ENCODE measurements at regions of chr1 and their contacts with region 1.

Region 1: DNA sequence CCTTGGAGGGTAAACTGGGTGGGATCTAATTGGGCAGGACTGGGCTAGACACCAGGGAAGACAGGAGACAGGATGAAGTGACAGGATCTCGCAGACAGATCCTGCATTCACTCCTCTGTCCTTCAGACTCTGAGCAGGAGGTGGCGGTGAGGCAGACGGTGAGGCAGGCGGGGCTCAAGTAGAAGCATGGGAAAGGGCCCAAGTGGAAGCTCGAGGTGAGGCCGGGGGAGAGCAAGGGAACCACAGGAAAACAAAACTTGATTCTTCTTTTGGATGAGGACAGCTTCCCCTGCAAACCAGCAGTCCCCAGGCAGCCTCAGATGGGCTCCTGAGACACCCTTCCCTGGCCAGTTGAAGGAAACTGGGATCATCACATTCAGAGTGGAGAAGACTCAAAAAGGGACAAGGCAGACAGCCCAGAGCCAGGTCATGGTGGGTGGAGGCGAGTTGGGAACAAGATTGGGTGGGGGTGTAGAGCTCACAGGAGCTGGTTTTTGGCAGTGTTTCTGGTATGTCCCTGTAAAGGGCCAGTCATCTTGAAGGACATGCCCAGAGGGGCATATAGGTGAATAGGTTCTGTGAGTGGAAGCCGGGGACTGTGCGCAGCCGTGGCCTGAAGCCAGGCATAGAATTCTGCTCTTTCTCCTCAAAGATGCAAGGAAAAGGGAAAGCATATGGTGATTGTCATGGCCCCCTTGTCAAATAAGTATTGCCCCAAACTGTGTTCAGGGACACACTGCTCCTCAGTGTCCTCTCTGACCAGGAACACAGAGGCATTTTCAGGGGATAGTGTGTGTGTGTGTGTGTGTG is 18.0 kb downstream of the INKA2 start:
- DNase-seq: no peak
- ATAC-seq: peak; percentile 9

Region 2: GRCh38 chr1:111354584-111354983 is 366.6 kb before region 1 on chr1:
- intact Hi-C with region 1: no loop called
- DNase-seq: no peak
- ATAC-seq: no peak

Region 3: GRCh38 chr1:111739194-111739924 is 18.2 kb after region 1 on chr1 and contains the start of gene INKA2:
- intact Hi-C with region 1: loop called (anchors 1 kb)
- DNase-seq: peak; percentile 97
- ATAC-seq: peak; percentile 87
- total RNA-seq, gene INKA2: 28.5 TPM

Region 4: GRCh38 chr1:111747282-111747734 is 26.1 kb after region 1 on chr1:
- intact Hi-C with region 1: loop called (anchors 2 kb)
- DNase-seq: no peak
- ATAC-seq: peak; percentile 20

Measured in Right ventricle myocardium inferior (tissue), 1 donor.